ENCODE measurements at regions of chr7 and their contacts with region 1.

Region 1: DNA sequence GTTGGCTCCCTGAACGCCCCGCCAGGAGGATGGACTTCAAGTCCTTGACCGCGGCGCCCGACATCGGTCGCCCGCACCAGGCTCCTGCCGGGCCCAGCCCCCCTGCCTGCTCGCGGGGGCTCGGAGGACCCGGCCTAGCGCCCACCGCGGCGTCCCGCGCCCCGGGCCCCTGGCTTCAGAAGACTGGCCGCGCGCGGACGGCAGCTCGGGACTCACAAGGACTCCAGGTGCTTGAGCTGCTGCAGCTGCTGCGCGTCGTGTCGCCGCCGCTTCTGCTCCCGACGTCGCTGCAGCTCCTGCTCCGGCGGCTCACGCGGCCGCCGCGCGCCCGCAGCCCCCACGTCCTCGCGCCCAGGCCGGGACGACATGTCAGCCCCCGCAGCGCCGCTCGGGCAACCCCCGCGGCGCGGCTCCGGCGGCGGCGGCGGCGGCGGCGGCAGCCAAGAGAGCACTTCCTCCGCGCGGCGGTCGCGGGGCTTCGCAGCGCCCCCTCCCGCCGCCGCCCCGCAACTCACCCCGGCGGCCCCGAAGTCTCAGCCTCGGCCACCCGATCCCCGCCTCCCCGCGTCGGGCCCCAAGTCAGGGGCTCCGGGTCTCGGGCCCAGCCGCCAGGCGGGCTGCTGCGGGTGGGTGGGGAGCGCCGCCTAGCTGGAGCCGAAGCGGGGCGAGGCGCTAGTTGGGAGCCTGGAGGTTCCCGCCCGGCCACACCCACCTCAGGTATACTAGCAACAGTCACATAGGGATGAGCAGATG is at the start of gene RP9:
- DNase-seq: peak; percentile 72
- H3K4me3 Mint-ChIP-seq: peak within 1 kb of the TSS; percentile 91
- H3K27ac Mint-ChIP-seq: peak within 1 kb of the TSS; percentile 42
- H3K4me1 Mint-ChIP-seq: peaks cover 34% of the 10 kb centered on the region
- H3K27me3 Mint-ChIP-seq: peaks cover 21% of the 10 kb centered on the region
- total RNA-seq, gene RP9: 22.6 and 23.6 TPM in 2 replicates

Region 2: GRCh38 chr7:32490127-32490822 is 618.9 kb before region 1 on chr7 and contains the start of gene LSM5:
- intact Hi-C with region 1: loop called (anchors 2 kb)
- DNase-seq: peak; percentile 85
- H3K4me3 Mint-ChIP-seq: peak within 1 kb of the TSS; percentile 89
- H3K27ac Mint-ChIP-seq: peak within 1 kb of the TSS; percentile 91
- H3K4me1 Mint-ChIP-seq: peaks cover 24% of the 10 kb centered on the region
- H3K27me3 Mint-ChIP-seq: no peaks in the 10 kb centered on the region
- total RNA-seq, gene LSM5: 79.6 and 84.3 TPM in 2 replicates

Region 3: DNA sequence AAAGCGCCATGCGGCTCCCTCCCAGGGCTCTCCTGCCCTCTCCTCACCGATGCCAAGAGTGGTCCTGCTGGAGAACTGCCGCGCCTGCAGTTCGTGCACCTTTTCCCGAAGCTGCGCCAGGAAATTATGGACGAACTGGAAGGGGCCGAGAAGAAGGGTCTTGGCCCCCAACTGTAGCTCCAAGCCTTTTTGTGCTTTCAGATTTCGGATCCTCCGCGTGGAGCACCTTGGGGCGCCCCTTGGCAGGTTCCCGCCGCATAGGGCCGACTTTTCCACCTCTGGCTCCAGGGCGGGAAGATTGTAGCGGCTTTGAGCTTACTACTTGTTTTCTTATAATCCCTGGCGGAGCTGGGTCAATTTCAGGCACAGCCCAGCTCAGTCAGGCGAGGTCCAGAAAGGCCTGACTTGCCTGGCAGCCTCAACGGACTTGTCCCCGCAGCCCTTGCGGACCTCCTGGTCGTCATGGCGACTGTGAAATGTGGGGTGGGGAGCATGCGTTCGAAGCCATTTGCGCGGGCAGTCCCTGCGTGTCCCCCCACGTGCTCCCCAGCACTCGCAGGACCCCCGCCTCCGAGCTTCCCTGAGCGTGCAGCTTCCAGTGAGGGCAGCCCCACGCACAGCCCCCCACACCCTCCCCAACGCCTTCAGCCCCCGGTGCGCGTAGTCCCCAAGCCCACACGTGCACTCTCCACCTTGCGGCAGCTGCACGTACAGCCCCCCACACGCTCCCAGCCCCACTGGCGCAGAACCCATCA is 347.6 kb before region 1 on chr7:
- intact Hi-C with region 1: loop called (anchors 1 kb)
- DNase-seq: no peak
- H3K4me3 Mint-ChIP-seq: no peak overlapping the region
- H3K27ac Mint-ChIP-seq: no peak overlapping the region
- H3K4me1 Mint-ChIP-seq: peaks cover 9% of the 10 kb centered on the region
- H3K27me3 Mint-ChIP-seq: peaks cover 65% of the 10 kb centered on the region

Region 4: DNA sequence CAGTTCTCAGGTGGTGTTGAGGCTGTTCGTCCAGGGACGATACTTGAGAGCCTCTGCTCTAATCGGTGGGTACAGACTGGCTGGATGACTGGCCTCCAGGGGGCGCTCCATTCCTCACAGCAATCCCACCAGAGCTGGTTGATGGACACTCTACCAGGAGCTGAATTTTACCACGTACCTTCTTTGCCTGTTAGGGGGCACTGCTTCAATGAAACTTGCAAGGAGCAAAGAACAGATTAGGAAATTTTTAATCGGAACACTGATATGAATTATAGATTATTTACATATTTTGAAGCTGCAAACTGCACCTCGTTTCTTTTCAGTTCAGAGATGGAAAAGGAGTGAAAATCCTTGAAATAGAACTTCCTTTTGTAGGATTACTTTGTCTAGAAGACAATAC is 262.5 kb before region 1 on chr7:
- intact Hi-C with region 1: loop called (anchors 1 kb)
- DNase-seq: peak; percentile 74
- H3K4me3 Mint-ChIP-seq: peak overlapping the region; percentile 19
- H3K27ac Mint-ChIP-seq: no peak overlapping the region
- H3K4me1 Mint-ChIP-seq: peaks cover 11% of the 10 kb centered on the region
- H3K27me3 Mint-ChIP-seq: peaks cover 28% of the 10 kb centered on the region

Region 5: GRCh38 chr7:33040803-33041516 is 68.2 kb before region 1 on chr7:
- intact Hi-C with region 1: loop called (anchors 1 kb)
- DNase-seq: peak; percentile 67
- H3K4me3 Mint-ChIP-seq: peak overlapping the region; percentile 80
- H3K27ac Mint-ChIP-seq: peak overlapping the region; percentile 73
- H3K4me1 Mint-ChIP-seq: peaks cover 65% of the 10 kb centered on the region
- H3K27me3 Mint-ChIP-seq: no peaks in the 10 kb centered on the region

Region 6: DNA sequence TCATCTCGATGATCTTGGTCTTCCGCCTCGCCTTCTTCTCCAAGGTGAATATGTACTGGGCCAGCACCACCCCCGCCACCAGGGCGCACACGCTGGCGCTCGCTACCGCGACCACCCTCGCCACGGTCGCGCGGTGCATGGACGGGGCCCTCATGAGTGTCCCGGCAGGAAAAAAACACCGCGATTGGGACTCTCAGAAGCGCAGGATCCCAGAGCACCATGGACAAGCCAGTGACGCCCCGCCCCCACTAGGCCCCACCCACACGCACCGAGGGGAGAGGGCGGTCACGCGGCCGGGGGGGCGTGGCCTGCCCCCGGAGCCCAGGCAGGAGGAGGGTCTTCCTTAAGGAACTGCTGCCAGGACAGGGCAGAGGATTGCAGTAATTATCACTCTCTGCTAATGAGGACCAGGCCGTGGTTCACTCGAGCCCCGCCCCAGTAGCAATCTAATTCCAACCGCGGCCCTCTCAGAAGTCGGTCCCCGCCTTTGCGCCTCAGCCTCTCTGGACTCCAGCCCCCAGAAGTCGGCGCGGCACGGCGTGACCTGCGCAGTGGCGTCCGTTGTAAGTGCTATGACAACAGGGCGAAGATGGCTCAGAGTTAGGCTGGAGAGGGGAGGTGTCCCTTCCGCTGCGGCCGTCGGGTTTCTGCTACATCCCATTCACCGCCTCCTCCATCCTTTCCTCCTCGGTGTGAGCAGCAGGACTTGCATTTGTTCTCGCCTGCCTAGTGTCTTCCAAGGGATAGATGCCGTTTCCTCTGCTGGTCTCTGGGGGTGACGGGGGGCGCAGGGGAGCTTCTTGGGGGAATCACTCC is 20.0 kb after region 1 on chr7 and contains the start of gene BBS9:
- intact Hi-C with region 1: loop called (anchors 1 kb)
- DNase-seq: peak; percentile 88
- H3K4me3 Mint-ChIP-seq: peak within 1 kb of the TSS; percentile 94
- H3K27ac Mint-ChIP-seq: peak within 1 kb of the TSS; percentile 87
- H3K4me1 Mint-ChIP-seq: peaks cover 20% of the 10 kb centered on the region
- H3K27me3 Mint-ChIP-seq: peaks cover 5% of the 10 kb centered on the region
- total RNA-seq, gene BBS9: 3.8 and 6.3 TPM in 2 replicates

Region 7: GRCh38 chr7:33155811-33156210 is 46.6 kb after region 1 on chr7:
- intact Hi-C with region 1: no loop called
- DNase-seq: no peak
- H3K4me3 Mint-ChIP-seq: no peak overlapping the region
- H3K27ac Mint-ChIP-seq: no peak overlapping the region
- H3K4me1 Mint-ChIP-seq: no peaks in the 10 kb centered on the region
- H3K27me3 Mint-ChIP-seq: no peaks in the 10 kb centered on the region